Activated CD4-positive, alpha-beta T cell treated with anti-CD3 and anti-CD28 coated beads for 36 hours (primary cell): ENCODE measurements at regions of chr5 and their contacts with region 1.

Region 1: GRCh38 chr5:32174011-32174870 is at the start of gene GOLPH3:
- DNase-seq: peak; percentile 98
- ATAC-seq: peak; percentile 86
- H3K4me3 Mint-ChIP-seq: peak within 1 kb of the TSS; percentile 87
- H3K27ac Mint-ChIP-seq: peak within 1 kb of the TSS; percentile 97
- H3K4me1 Mint-ChIP-seq: peaks cover 30% of the 10 kb centered on the region
- H3K27me3 Mint-ChIP-seq: no peaks in the 10 kb centered on the region
- total RNA-seq, gene GOLPH3: 54.2 to 58.3 TPM

Region 2: GRCh38 chr5:32138839-32139493 is 35.3 kb before region 1 on chr5:
- CTCF ChIA-PET with region 1: interaction called, 3 read pairs
- POLR2A ChIA-PET with region 1: interaction called, 5 read pairs
- intact Hi-C with region 1: loop called in 1 of 2 experiments (anchors 2 kb)
- DNase-seq: peak; percentile 89
- ATAC-seq: peak; percentile 85
- H3K4me3 Mint-ChIP-seq: no peak overlapping the region
- H3K27ac Mint-ChIP-seq: peak overlapping the region; percentile 90
- H3K4me1 Mint-ChIP-seq: peaks cover 21% of the 10 kb centered on the region
- H3K27me3 Mint-ChIP-seq: no peaks in the 10 kb centered on the region

Region 3: GRCh38 chr5:32232441-32233219 is 58.4 kb after region 1 on chr5:
- CTCF ChIA-PET with region 1: interaction called, 13 read pairs
- POLR2A ChIA-PET with region 1: interaction called, 3 read pairs
- intact Hi-C with region 1: loop called in 1 of 2 experiments (anchors 2 kb)
- DNase-seq: peak; percentile 90
- ATAC-seq: peak; percentile 95
- H3K4me3 Mint-ChIP-seq: no peak overlapping the region
- H3K27ac Mint-ChIP-seq: peak overlapping the region; percentile 56
- H3K4me1 Mint-ChIP-seq: no peaks in the 10 kb centered on the region
- H3K27me3 Mint-ChIP-seq: no peaks in the 10 kb centered on the region

Region 4: GRCh38 chr5:32444431-32445286 is 270.4 kb after region 1 on chr5 and contains the start of gene ZFR:
- CTCF ChIA-PET with region 1: no interaction called
- POLR2A ChIA-PET with region 1: no interaction called
- intact Hi-C with region 1: loop called in 1 of 2 experiments (anchors 1 kb)
- DNase-seq: peak; percentile 97
- ATAC-seq: peak; percentile 90
- H3K4me3 Mint-ChIP-seq: peak within 1 kb of the TSS; percentile 99
- H3K27ac Mint-ChIP-seq: peak within 1 kb of the TSS; percentile 99
- H3K4me1 Mint-ChIP-seq: peaks cover 34% of the 10 kb centered on the region
- H3K27me3 Mint-ChIP-seq: no peaks in the 10 kb centered on the region
- total RNA-seq, gene ZFR: 60.6 to 81.4 TPM

Region 5: DNA sequence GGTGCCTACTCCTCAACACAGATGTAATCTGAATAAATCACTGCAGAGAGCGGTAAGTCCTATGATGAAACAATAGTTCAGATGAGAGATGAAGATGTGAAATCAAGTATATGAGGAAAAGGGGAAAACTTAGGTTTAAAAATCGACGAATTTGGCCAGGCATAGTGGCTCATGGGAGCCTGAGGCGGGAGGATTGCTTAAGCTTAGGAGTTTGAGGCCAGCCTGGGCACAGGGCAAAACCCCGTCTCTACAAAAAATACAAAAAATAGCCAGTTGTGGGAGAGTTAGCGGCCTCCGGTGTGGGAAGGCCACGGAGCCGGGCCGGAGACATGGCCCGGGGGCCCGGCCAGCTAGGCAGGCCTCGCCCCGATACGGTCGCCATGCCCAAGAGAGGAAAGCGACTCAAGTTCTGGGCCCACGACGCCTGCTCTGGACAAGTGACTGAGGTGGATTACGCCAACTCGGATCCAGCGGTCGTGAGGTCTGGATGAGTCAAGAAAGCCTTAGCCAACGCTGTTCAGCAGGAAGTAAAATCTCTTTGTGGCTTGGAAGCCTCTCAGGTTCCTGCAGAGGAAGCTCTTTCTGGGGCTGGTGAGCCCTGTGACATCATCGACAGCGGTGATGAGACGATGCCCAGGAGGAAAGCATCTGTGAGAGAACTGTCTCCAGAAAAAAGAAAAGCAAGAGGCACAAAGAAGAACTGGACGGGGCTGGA is 348.3 kb after region 1 on chr5:
- CTCF ChIA-PET with region 1: no interaction called
- POLR2A ChIA-PET with region 1: no interaction called
- intact Hi-C with region 1: no loop called
- DNase-seq: peak; percentile 64
- ATAC-seq: peak; percentile 92
- H3K4me3 Mint-ChIP-seq: no peak overlapping the region
- H3K27ac Mint-ChIP-seq: peak overlapping the region; percentile 32
- H3K4me1 Mint-ChIP-seq: peaks cover 16% of the 10 kb centered on the region
- H3K27me3 Mint-ChIP-seq: no peaks in the 10 kb centered on the region